Activated CD8-positive, alpha-beta T cell treated with anti-CD3 and anti-CD28 coated beads for 36 hours (primary cell): ENCODE measurements at regions of chr11 and their contacts with region 1.

Region 1: DNA sequence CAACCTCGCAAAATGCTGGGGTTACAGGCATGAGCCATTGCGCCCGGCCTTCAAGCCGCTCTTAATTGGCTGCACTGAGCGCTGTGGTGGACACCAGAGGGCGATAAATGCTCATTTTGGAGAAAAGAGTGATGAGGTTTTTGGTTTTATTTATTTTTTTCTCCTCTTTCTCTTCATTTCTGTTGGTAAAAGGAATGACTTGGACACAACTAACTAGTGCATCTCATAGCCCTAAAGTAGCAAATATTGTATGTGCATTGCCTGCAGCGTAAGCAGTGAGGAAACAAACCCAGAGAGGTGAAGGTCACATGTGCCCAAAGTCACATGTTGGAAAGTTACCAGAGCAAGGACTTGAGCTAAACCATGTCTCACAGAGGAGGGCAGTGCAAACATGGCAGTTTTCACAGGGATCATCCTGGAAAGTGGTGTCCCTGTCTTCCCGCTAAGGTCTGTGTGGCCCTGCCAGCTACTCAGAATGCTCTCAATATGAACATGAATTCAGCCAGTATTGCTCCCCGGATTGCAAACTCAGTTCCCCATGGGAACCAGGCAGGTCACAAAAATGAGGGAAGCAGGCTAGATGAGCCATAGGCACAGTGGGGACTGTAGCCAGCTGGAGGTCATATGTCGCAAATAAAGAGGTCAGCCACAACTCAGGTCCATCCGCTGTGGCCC is 8.6 kb upstream of the CD82 start:
- DNase-seq: peak; percentile 85
- ATAC-seq: peak; percentile 66
- H3K4me3 Mint-ChIP-seq: no peak overlapping the region
- H3K27ac Mint-ChIP-seq: peak overlapping the region; percentile 40
- H3K4me1 Mint-ChIP-seq: peaks cover 30% of the 10 kb centered on the region
- H3K27me3 Mint-ChIP-seq: no peaks in the 10 kb centered on the region
- CTCF ChIP-seq: peak; percentile 80

Region 2: GRCh38 chr11:44445500-44446365 is 111.1 kb before region 1 on chr11:
- CTCF ChIA-PET with region 1: no interaction called
- POLR2A ChIA-PET with region 1: no interaction called
- intact Hi-C with region 1: no loop called
- DNase-seq: no peak
- ATAC-seq: no peak
- H3K4me3 Mint-ChIP-seq: no peak overlapping the region
- H3K27ac Mint-ChIP-seq: no peak overlapping the region
- H3K4me1 Mint-ChIP-seq: no peaks in the 10 kb centered on the region
- H3K27me3 Mint-ChIP-seq: peaks cover 10% of the 10 kb centered on the region
- CTCF ChIP-seq: no peak

Region 3: GRCh38 chr11:44538375-44539054 is 18.4 kb before region 1 on chr11:
- CTCF ChIA-PET with region 1: interaction called, 14 read pairs
- POLR2A ChIA-PET with region 1: no interaction called
- intact Hi-C with region 1: no loop called
- DNase-seq: peak; percentile 81
- ATAC-seq: peak; percentile 97
- H3K4me3 Mint-ChIP-seq: no peak overlapping the region
- H3K27ac Mint-ChIP-seq: no peak overlapping the region
- H3K4me1 Mint-ChIP-seq: no peaks in the 10 kb centered on the region
- H3K27me3 Mint-ChIP-seq: no peaks in the 10 kb centered on the region
- CTCF ChIP-seq: peak; percentile 96

Region 4: DNA sequence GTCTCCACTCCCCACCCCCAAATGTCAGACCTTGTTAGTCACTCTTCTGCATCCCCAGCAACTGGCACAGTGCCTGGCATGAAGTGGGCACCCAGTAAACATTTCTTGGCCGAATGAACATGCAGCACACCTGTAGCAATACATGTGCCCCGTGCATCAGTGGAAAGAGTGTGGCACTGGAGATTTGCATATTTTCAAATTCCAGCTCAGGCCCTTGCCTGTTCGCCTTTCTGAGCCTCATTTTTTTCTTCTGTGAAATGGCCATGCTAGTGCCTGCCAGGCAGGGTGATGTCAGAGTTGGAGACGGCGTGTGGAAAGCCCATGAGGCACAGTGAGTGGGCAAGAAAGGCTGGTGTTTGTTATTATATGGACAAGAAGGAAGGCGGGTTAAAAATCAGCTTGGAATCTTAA is 47.3 kb after region 1 on chr11:
- CTCF ChIA-PET with region 1: interaction called, 307 read pairs
- POLR2A ChIA-PET with region 1: no interaction called
- intact Hi-C with region 1: no loop called
- DNase-seq: no peak
- ATAC-seq: no peak
- H3K4me3 Mint-ChIP-seq: no peak overlapping the region
- H3K27ac Mint-ChIP-seq: peak overlapping the region; percentile 77
- H3K4me1 Mint-ChIP-seq: peaks cover 90% of the 10 kb centered on the region
- H3K27me3 Mint-ChIP-seq: no peaks in the 10 kb centered on the region
- CTCF ChIP-seq: no peak

Region 5: GRCh38 chr11:44621140-44621681 is 64.3 kb after region 1 on chr11:
- CTCF ChIA-PET with region 1: interaction called, 307 read pairs
- POLR2A ChIA-PET with region 1: no interaction called
- intact Hi-C with region 1: loop called (anchors 1 kb)
- DNase-seq: peak; percentile 65
- ATAC-seq: peak; percentile 43
- H3K4me3 Mint-ChIP-seq: no peak overlapping the region
- H3K27ac Mint-ChIP-seq: no peak overlapping the region
- H3K4me1 Mint-ChIP-seq: peaks cover 20% of the 10 kb centered on the region
- H3K27me3 Mint-ChIP-seq: no peaks in the 10 kb centered on the region
- CTCF ChIP-seq: peak; percentile 86

Region 6: GRCh38 chr11:44893846-44894617 is 337.2 kb after region 1 on chr11:
- CTCF ChIA-PET with region 1: interaction called, 5 read pairs
- POLR2A ChIA-PET with region 1: no interaction called
- intact Hi-C with region 1: loop called (anchors 10 kb)
- DNase-seq: peak; percentile 69
- ATAC-seq: peak; percentile 89
- H3K4me3 Mint-ChIP-seq: no peak overlapping the region
- H3K27ac Mint-ChIP-seq: no peak overlapping the region
- H3K4me1 Mint-ChIP-seq: no peaks in the 10 kb centered on the region
- H3K27me3 Mint-ChIP-seq: no peaks in the 10 kb centered on the region
- CTCF ChIP-seq: peak; percentile 84